Astrocyte of the cerebellum (primary cell): ENCODE measurements at regions of chr17 and their contacts with region 1.

Region 1: GRCh38 chr17:74859459-74860228 is at the start of gene GRIN2C:
- DNase-seq: no peak
- H3K4me3 ChIP-seq: peak within 1 kb of the TSS; percentile 20
- CTCF ChIP-seq: peak; percentile 8

Region 2: GRCh38 chr17:74768069-74768762 is 91.4 kb before region 1 on chr17:
- in situ Hi-C with region 1: no loop called
- DNase-seq: no peak
- H3K4me3 ChIP-seq: no peak overlapping the region
- CTCF ChIP-seq: no peak

Region 3: GRCh38 chr17:74790161-74791054 is 69.2 kb before region 1 on chr17:
- in situ Hi-C with region 1: loop called (anchors 5 kb)
- DNase-seq: no peak
- H3K4me3 ChIP-seq: no peak overlapping the region
- CTCF ChIP-seq: no peak